ENCODE measurements at regions of chr3 and their contacts with region 1.

Region 1: DNA sequence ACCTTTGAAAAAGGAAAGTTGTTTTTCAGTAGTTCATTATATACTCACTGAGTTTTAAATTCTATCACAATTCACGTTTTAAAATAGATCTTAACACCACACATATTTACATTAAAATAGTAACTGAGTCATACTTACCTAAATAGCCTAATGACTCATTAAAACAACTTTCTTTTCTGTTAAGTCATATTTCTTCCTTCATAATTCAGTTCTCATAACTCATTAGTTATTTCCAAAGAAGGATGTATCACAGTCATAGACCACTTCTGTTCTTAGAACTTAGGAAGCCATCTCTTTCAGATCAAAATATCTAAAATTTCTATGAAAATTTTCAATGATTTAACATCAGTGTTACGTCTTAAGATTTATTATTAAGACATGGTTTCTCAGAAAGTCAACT is 885.9 kb downstream of the FHIT start:
- DNase-seq: peak; percentile 43
- ATAC-seq: peak; percentile 40
- H3K4me3 ChIP-seq: no peak overlapping the region
- H3K27ac ChIP-seq: no peak overlapping the region
- H3K4me1 ChIP-seq: peaks cover 13% of the 10 kb centered on the region
- H3K27me3 ChIP-seq: no peaks in the 10 kb centered on the region
- CTCF ChIP-seq: no peak

Region 2: DNA sequence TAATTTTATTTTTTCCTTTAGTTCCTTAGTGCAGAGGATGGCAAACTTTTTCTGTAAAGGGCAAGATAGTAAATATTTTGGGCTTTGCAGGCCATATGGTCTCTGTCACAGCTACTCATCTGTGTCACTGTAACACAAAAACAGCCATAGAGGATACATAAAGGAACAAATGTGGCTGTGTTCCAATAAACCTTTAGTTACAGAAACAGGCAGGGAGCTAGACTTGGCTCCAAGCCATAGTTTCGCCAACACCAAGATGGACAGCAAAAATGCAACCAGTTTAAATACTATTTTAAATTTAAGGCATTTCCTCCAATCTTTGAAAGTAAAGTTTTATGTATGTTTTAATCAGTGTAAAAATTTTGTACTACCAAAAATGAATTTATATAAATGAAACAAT is 132.5 kb after region 1 on chr3:
- CTCF ChIA-PET with region 1: no interaction called
- POLR2A ChIA-PET with region 1: no interaction called
- intact Hi-C with region 1: loop called (anchors 10 kb)
- DNase-seq: no peak
- ATAC-seq: no peak
- H3K4me3 ChIP-seq: no peak overlapping the region
- H3K27ac ChIP-seq: no peak overlapping the region
- H3K4me1 ChIP-seq: 0 out of 2 replicates have a peak, but pooled peaks cover 6% of the 10 kb centered on the region
- H3K27me3 ChIP-seq: no peaks in the 10 kb centered on the region
- CTCF ChIP-seq: no peak

Region 3: DNA sequence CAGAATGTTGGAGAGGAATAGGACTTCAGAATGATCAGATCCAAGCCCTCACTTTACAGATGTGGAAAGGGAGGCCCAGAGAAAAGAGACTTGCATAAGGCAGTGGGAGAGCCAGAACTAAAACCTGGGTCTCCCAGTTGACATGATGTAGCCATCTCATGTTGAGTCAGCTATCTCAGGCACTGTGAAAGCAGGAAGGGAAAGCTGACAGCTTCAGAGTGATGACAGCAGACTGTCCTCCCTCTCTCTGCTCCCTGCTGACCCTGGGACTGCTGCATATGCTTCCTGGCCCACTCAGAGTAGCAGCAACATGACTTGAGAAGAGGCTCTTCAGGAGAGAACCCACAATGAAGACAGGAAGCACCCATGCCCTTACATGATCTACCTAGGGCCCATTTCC is 871.2 kb after region 1 on chr3:
- CTCF ChIA-PET with region 1: no interaction called
- POLR2A ChIA-PET with region 1: no interaction called
- intact Hi-C with region 1: no loop called
- DNase-seq: no peak
- ATAC-seq: peak; percentile 18; the same call in 1 of the 2 replicates
- H3K4me3 ChIP-seq: no peak overlapping the region
- H3K27ac ChIP-seq: no peak overlapping the region
- H3K4me1 ChIP-seq: no peaks in the 10 kb centered on the region
- H3K27me3 ChIP-seq: no peaks in the 10 kb centered on the region
- CTCF ChIP-seq: no peak

Measured in PC-3 (cell line).